Thyroid gland (tissue), 4 donors: ENCODE measurements at regions of chr5 and their contacts with region 1.

Region 1: GRCh38 chr5:69334793-69335268 is 2.2 kb upstream of the CCDC125 start:
- DNase-seq: peak; percentile 91 to 93
- H3K4me3 ChIP-seq: no peak overlapping the region
- H3K27ac ChIP-seq: no peak overlapping the region
- H3K4me1 ChIP-seq: peaks cover 5 to 8% of the 10 kb centered on the region in 2 donors
- H3K27me3 ChIP-seq: no peaks in the 10 kb centered on the region
- CTCF ChIP-seq: peak; percentile 41 to 83 (median 74)
- POLR2A ChIP-seq: no peak

Region 2: GRCh38 chr5:69042915-69043658 is 291.7 kb before region 1 on chr5:
- intact Hi-C with region 1: loop called (anchors 10 kb)
- DNase-seq: peak; percentile 71 to 74
- H3K4me3 ChIP-seq: peak overlapping the region in 2 of 3 donors; percentile 25 to 29
- H3K27ac ChIP-seq: peak overlapping the region; percentile 56 to 74 (median 73)
- H3K4me1 ChIP-seq: no peaks in the 10 kb centered on the region
- H3K27me3 ChIP-seq: no peaks in the 10 kb centered on the region
- CTCF ChIP-seq: peak; percentile 81 to 95 (median 88)
- POLR2A ChIP-seq: peak in 1 of 2 donors; percentile 32

Region 3: DNA sequence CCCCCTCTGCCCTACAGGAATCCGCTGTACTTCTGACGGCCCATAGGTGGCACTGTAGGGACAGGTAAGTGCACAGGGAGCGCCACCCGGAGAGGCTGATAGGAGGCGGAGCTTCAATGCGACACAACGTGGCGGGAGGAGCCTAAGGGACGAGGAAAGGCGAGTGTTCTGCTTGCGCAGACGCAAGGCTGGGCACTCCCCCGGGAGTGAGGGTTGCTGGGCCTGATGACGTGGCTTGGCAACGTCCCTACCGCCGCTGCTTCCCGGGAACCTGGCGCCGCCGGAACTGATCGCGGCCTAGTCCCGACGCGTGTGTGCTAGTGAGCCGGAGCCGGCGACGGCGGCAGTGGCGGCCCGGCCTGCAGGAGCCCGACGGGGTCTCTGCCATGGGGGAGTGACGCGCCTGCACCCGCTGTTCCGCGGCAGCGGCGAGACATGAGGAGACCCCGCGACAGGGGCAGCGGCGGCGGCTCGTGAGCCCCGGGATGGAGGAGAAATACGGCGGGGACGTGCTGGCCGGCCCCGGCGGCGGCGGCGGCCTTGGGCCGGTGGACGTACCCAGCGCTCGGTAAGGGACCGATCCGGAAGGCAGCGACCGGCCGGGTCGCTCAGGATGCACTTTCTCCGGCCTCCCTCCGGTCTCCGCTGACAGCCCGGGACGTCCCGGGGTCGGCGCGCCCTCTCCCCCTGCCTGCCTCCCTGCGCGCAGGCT is 240.9 kb before region 1 on chr5 and contains the start of gene SLC30A5:
- intact Hi-C with region 1: loop called (anchors 10 kb)
- DNase-seq: peak; percentile 99 to 100
- H3K4me3 ChIP-seq: peak within 1 kb of the TSS; percentile 71 to 96 (median 86)
- H3K27ac ChIP-seq: peak within 1 kb of the TSS; percentile 85 to 91 (median 90)
- H3K4me1 ChIP-seq: peaks cover 4 to 20% of the 10 kb centered on the region in 2 donors
- H3K27me3 ChIP-seq: no peaks in the 10 kb centered on the region
- CTCF ChIP-seq: peak; percentile 57 to 99 (median 90)
- POLR2A ChIP-seq: peak in 1 of 2 donors; percentile 95
- total RNA-seq, gene SLC30A5: 62.8 to 76.7 (median 71.2) TPM